PC-3 (cell line): ENCODE measurements at regions of chr7 and their contacts with region 1.

Region 1: DNA sequence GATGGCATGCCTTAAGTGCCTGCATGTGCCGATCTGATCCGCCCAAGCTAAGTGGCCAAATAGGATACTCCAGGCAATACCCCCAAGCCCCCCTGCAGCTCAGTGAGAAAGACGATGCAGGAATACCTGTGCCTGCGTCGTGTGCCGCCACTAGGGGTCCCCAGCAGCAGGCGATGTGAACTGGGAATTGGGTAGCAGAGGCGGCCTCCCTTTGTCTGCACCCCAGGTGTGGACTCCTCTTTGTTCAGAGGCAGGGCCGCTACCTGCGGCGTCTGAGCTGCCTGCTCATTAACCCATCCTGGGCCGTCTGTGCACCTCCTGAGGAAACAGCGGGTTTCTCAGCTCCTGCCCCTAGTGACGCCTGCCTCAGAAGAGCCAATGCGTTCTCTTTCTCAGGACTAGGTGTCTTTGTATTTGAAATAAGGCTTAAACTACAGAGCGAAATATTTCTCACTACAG is 4.8 kb upstream of the CHN2 start:
- DNase-seq: peak; percentile 62
- ATAC-seq: peak; percentile 64
- H3K4me3 ChIP-seq: peak overlapping the region; percentile 42; the same call in 1 of the 2 replicates
- H3K27ac ChIP-seq: no peak overlapping the region; the same call in 1 of the 2 replicates
- H3K4me1 ChIP-seq: peaks cover 18% of the 10 kb centered on the region
- H3K27me3 ChIP-seq: no peaks in the 10 kb centered on the region
- CTCF ChIP-seq: peak; percentile 90

Region 2: DNA sequence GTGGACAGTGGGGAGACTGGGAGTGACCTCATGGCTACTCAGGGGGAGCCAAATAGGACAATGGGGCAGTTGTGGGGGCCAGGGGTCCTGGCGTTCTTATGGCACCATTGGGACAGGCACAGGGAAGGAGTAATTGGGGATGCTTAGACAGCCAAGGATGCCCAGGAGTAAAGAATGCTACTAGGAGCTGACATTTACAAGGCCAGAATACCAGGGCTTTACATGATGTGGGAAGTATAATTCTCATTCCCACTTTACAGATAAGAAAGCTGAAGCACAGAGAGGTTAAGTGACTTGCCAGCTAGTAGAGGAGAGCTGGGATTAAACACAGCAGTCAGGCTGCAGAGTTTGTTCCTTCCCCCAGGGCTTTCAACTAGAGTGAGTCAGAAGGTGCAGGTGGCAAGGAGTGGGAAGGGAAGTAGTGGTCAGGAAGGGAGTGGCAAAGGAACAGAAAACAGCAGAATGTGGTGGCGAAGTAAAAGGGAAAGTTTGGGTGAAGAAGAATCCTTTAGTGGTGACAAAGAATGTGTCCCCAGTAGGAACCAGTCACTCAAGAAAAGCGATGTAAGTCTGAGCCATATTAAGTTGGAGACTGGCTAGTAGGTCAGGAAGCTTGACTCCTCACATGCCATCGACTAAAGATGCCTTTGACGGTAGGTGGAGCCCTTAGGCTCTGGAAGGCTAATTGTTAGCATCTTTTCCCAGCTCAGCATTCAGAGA is 76.2 kb before region 1 on chr7:
- CTCF ChIA-PET with region 1: interaction called, 18 read pairs
- POLR2A ChIA-PET with region 1: no interaction called
- intact Hi-C with region 1: loop called (anchors 1 kb)
- DNase-seq: peak; percentile 89
- ATAC-seq: peak; percentile 90
- H3K4me3 ChIP-seq: peak overlapping the region; percentile 1; the same call in 1 of the 2 replicates
- H3K27ac ChIP-seq: peak overlapping the region; percentile 76
- H3K4me1 ChIP-seq: peaks cover 51% of the 10 kb centered on the region
- H3K27me3 ChIP-seq: no peaks in the 10 kb centered on the region
- CTCF ChIP-seq: peak; percentile 74

Region 3: GRCh38 chr7:29285444-29285793 is 95.6 kb after region 1 on chr7:
- CTCF ChIA-PET with region 1: interaction called, 3 read pairs
- POLR2A ChIA-PET with region 1: no interaction called
- intact Hi-C with region 1: loop called (anchors 1 kb)
- DNase-seq: peak; percentile 97
- ATAC-seq: peak; percentile 85
- H3K4me3 ChIP-seq: no peak overlapping the region
- H3K27ac ChIP-seq: peak overlapping the region; percentile 89
- H3K4me1 ChIP-seq: peaks cover 45% of the 10 kb centered on the region
- H3K27me3 ChIP-seq: no peaks in the 10 kb centered on the region
- CTCF ChIP-seq: no peak

Region 4: DNA sequence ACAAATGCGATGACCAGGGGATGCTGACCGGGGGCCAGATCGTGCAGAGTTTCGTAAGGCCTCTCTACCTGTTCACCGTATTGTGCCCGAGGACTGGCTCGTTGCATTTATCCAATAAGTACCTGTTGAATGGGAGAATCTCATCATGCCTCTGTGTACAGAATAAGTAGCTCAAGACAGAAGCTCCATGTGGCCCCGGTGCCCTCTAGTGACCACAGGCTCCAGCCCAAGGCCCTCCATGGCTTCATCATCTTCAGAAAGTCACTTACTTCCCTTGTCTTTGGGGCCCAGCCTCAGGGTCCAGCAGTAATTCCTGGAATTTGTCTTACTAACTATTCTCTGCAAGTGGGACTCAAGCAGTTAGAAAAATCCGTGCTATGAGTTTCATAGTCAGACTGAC is 155.8 kb after region 1 on chr7:
- CTCF ChIA-PET with region 1: interaction called, 17 read pairs
- POLR2A ChIA-PET with region 1: no interaction called
- intact Hi-C with region 1: loop called (anchors 1 kb)
- DNase-seq: peak; percentile 57
- ATAC-seq: peak; percentile 53
- H3K4me3 ChIP-seq: no peak overlapping the region
- H3K27ac ChIP-seq: no peak overlapping the region
- H3K4me1 ChIP-seq: peaks cover 19% of the 10 kb centered on the region
- H3K27me3 ChIP-seq: no peaks in the 10 kb centered on the region
- CTCF ChIP-seq: peak; percentile 65

Region 5: GRCh38 chr7:29609162-29610037 is 419.6 kb after region 1 on chr7:
- CTCF ChIA-PET with region 1: no interaction called
- POLR2A ChIA-PET with region 1: no interaction called
- intact Hi-C with region 1: loop called (anchors 10 kb)
- DNase-seq: peak; percentile 88
- ATAC-seq: peak; percentile 8
- H3K4me3 ChIP-seq: peak overlapping the region; percentile 29; the same call in 1 of the 2 replicates
- H3K27ac ChIP-seq: peak overlapping the region; percentile 94
- H3K4me1 ChIP-seq: peaks cover 75% of the 10 kb centered on the region
- H3K27me3 ChIP-seq: no peaks in the 10 kb centered on the region
- CTCF ChIP-seq: peak; percentile 87